HAP-1 (cell line): ENCODE measurements at regions of chr10 and their contacts with region 1.

Region 1: GRCh38 chr10:129971381-129972144 is 7.5 kb upstream of the EBF3 start:
- DNase-seq: peak; percentile 71 to 82
- H3K4me3 ChIP-seq: peak overlapping the region; percentile 35
- H3K4me1 ChIP-seq: peaks cover 11% of the 10 kb centered on the region
- H3K27me3 ChIP-seq: peaks cover 16% of the 10 kb centered on the region

Region 2: DNA sequence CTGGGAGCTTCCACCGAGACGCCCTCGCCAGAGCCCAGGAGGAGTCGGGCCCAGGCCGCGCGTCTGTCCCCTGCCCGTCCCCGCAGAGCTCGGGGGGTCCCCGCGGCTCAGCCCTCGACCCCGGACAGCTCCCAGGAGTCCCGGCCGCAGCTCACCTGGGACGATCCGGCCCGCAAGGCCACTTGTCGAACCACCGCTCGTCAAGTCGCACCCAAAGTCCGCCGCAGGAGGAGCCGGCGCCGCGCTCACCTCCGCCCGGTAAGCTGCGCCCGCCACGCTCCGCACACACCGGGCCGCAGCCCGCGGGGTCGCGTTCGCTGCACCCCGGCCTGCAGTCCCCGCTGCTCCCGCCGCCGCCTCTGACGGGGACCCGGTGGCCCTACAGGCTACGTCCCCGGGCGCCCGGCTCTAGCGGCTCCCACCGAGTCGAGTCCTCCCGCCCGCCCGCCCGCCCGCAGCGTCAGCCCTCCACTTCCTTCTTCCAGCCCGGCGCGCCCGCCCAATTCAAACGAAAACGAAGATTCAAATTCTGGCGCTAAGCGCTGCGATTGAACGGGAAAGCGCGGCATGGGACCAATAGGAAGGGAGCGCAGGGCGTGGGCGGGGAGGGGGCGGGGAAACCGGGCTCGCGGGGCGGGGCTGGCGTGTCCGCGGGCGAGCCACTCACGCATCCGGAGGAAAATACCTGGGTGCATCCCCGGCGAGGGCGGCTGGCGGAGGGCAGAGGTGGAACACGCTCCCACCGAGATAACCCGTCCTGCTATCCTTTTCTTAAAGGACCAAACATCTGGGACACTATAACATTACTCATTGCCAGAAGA is 1845.4 kb before region 1 on chr10 and contains the start of gene MKI67:
- in situ Hi-C with region 1: loop called (anchors 25 kb)
- DNase-seq: peak; percentile 91 to 93
- H3K4me3 ChIP-seq: peak within 1 kb of the TSS; percentile 88
- H3K4me1 ChIP-seq: peaks cover 24% of the 10 kb centered on the region
- H3K27me3 ChIP-seq: no peaks in the 10 kb centered on the region

Region 3: GRCh38 chr10:128263891-128264688 is 1707.5 kb before region 1 on chr10:
- in situ Hi-C with region 1: loop called (anchors 25 kb)
- DNase-seq: peak; percentile 66 to 82
- H3K4me3 ChIP-seq: no peak overlapping the region
- H3K4me1 ChIP-seq: no peaks in the 10 kb centered on the region
- H3K27me3 ChIP-seq: peaks cover 11% of the 10 kb centered on the region

Region 4: GRCh38 chr10:129030996-129031843 is 940.3 kb before region 1 on chr10:
- in situ Hi-C with region 1: loop called (anchors 10 kb)
- DNase-seq: peak; percentile 45 to 65
- H3K4me3 ChIP-seq: no peak overlapping the region
- H3K4me1 ChIP-seq: no peaks in the 10 kb centered on the region
- H3K27me3 ChIP-seq: peaks cover 36% of the 10 kb centered on the region

Region 5: DNA sequence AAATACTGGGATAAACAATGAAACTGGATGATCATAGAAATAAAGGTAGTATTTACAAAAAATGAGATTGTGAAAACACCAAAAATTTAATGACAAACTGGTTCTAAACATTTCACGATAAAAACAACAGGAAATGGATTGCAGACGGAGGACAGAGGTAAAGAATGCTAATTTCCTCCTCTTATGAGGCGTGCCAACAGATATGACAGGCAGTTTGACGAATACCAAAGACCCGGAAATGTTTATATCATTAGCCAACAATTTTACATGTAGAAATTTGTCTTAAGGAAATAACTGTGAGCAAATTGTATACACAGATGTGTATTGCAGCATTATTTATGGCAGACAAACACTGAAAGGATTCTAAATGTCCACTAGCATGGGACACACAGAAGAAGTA is 666.5 kb before region 1 on chr10:
- in situ Hi-C with region 1: no loop called
- DNase-seq: no peak
- H3K4me3 ChIP-seq: no peak overlapping the region
- H3K4me1 ChIP-seq: no peaks in the 10 kb centered on the region
- H3K27me3 ChIP-seq: no peaks in the 10 kb centered on the region

Region 6: DNA sequence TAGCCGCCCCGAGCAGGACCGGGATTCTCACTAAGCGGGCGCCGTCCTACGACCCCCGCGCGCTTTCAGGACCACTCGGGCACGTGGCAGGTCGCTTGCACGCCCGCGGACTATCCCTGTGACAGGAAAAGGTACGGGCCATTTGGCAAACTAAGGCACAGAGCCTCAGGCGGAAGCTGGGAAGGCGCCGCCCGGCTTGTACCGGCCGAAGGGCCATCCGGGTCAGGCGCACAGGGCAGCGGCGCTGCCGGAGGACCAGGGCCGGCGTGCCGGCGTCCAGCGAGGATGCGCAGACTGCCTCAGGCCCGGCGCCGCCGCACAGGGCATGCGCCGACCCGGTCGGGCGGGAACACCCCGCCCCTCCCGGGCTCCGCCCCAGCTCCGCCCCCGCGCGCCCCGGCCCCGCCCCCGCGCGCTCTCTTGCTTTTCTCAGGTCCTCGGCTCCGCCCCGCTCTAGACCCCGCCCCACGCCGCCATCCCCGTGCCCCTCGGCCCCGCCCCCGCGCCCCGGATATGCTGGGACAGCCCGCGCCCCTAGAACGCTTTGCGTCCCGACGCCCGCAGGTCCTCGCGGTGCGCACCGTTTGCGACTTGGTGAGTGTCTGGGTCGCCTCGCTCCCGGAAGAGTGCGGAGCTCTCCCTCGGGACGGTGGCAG is 504.7 kb before region 1 on chr10 and contains the start of gene MGMT:
- in situ Hi-C with region 1: loop called (anchors 25 kb)
- DNase-seq: peak; percentile 47 to 95
- H3K4me3 ChIP-seq: peak within 1 kb of the TSS; percentile 50
- H3K4me1 ChIP-seq: peaks cover 3% of the 10 kb centered on the region; the same call in 1 of the 2 replicates
- H3K27me3 ChIP-seq: no peaks in the 10 kb centered on the region

Region 7: DNA sequence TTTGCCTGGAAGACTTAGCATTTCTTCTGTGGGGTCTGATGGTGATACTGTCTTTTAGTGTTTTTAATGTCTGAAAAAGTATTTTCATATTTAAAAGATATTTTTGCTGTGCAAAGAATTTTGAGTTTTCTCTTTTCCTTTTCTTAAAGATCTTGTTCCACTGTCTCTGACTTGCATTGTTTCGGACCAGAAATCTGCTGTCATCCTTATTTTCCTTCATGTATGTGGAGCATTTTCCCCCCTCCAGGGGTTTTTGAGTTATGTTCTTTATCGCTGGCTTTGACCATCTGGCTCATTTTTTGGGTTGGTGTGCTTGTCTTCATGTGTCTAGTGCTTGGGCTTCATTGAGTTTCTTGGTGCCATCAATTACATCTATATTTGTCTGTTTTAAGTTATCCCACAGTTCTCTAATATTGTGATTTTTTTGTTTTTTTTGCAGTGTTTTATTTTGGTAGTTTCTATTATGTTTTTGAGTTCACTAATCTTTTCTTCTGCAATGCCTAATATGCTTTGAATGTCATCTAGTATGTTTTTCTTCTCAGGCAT is 384.6 kb before region 1 on chr10:
- in situ Hi-C with region 1: no loop called
- DNase-seq: no peak
- H3K4me3 ChIP-seq: no peak overlapping the region
- H3K4me1 ChIP-seq: no peaks in the 10 kb centered on the region
- H3K27me3 ChIP-seq: no peaks in the 10 kb centered on the region

Region 8: GRCh38 chr10:131569851-131570715 is 1598.5 kb after region 1 on chr10:
- in situ Hi-C with region 1: no loop called
- DNase-seq: no peak
- H3K4me3 ChIP-seq: no peak overlapping the region
- H3K4me1 ChIP-seq: no peaks in the 10 kb centered on the region
- H3K27me3 ChIP-seq: no peaks in the 10 kb centered on the region